ENCODE measurements at regions of chr6 and their contacts with region 1.

Region 1: GRCh38 chr6:52407467-52407866 is 12.7 kb upstream of the EFHC1 start:
- DNase-seq: no peak
- H3K4me3 ChIP-seq: no peak overlapping the region
- H3K27me3 ChIP-seq: no peaks in the 10 kb centered on the region
- CTCF ChIP-seq: peak; percentile 56

Region 2: GRCh38 chr6:52271852-52272460 is 135.5 kb before region 1 on chr6:
- CTCF ChIA-PET with region 1: no interaction called
- POLR2A ChIA-PET with region 1: no interaction called
- DNase-seq: no peak
- H3K4me3 ChIP-seq: no peak overlapping the region
- H3K27me3 ChIP-seq: no peaks in the 10 kb centered on the region
- CTCF ChIP-seq: no peak

Region 3: GRCh38 chr6:52566853-52567279 is 159.4 kb after region 1 on chr6:
- CTCF ChIA-PET with region 1: no interaction called
- POLR2A ChIA-PET with region 1: interaction called, 19 read pairs
- DNase-seq: peak; percentile 97
- H3K4me3 ChIP-seq: no peak overlapping the region
- H3K27me3 ChIP-seq: no peaks in the 10 kb centered on the region
- CTCF ChIP-seq: no peak

Region 4: DNA sequence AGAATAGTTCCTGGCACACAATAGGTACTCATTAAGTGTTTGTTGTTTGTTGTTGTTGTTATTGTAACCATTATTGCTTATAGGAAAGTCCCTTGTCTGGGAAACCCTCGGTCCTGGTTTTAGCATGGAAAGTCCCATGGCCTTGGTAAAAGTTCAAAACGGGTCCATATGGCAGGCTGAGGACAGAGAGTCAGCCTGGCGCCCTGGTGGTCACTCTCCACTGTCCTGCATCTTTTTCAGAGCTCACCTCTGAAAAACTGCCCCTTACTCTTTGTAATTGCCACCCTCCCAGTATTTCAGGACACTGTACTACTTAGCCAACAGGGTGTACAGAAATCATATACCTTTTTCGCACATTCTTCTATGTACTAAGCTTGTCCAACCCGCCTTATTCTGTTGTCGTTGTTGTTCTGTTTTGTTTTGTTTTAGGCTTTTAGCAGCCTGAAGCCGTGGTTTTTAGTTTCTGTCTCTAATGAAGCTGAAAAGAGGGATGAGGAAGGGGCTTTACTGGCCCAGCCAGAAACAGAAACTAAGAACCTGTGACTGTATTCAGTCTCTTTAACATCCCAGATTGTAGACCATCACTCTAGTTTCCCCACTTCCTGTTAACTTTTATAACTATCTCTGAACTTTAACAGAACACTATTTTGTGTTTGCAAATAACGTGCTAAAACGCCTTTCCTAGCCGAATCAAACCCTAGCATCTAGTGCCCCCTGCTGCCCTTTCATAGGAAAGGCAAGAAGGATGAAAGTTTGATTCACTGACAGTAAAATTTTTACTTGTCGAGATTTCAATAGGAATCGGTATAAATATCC is 255.9 kb after region 1 on chr6:
- CTCF ChIA-PET with region 1: interaction called, 16 read pairs
- POLR2A ChIA-PET with region 1: no interaction called
- DNase-seq: peak; percentile 29
- H3K4me3 ChIP-seq: peak overlapping the region; percentile 82
- H3K27me3 ChIP-seq: no peaks in the 10 kb centered on the region
- CTCF ChIP-seq: peak; percentile 76